GM12878 (cell line): ENCODE measurements at regions of chr10 and their contacts with region 1.

Region 1: GRCh38 chr10:72223743-72224101 is 7.6 kb upstream of the ASCC1 start:
- DNase-seq: no peak
- ATAC-seq: peak; percentile 71
- H3K4me3 ChIP-seq: no peak overlapping the region
- H3K27ac ChIP-seq: peak overlapping the region; percentile 47
- H3K4me1 ChIP-seq: peaks cover 29% of the 10 kb centered on the region
- H3K27me3 ChIP-seq: no peaks in the 10 kb centered on the region
- CTCF ChIP-seq: no peak
- EP300 ChIP-seq: no peak
- POLR2A ChIP-seq: no peak
- RAD21 ChIP-seq: no peak

Region 2: DNA sequence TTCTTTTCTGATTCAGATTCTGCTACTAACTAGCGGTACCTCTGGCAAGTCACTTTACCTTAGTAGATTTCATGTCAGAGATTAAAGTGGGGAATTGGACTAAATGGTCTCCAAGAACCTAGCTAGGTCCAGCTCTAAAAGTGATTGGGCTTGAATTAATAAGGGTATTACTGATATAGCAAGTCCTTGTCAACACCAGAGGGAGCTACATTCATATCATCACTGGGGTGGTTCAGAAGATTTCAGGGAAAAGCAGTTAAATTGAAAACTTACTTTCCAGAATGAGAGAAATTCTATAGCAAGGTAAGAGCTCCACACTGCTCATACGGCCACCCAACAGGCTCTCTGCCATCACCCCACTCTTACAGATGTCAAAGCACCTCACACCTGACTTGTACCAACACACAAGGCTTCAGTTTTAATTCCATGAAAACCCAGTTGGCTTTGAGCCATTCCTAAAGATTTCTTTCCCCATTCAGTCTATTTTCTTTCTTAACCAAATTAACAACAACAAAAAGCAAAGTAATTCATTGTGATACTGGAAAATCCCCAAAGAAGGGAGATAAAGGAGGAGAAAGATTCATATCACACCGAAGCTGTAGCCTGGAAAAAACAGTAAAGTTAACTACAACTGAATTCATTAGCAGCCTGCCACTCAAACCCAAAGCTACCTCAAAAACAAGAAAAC is 97.4 kb before region 1 on chr10:
- CTCF ChIA-PET with region 1: interaction called, 127 read pairs
- POLR2A ChIA-PET with region 1: interaction called, 18 read pairs
- RAD21 ChIA-PET with region 1: interaction called, 89 read pairs
- SMC1A ChIA-PET with region 1: interaction called, 122 read pairs
- in situ Hi-C with region 1: no loop called
- intact Hi-C with region 1: no loop called
- DNase-seq: no peak
- ATAC-seq: peak; percentile 42
- H3K4me3 ChIP-seq: no peak overlapping the region
- H3K27ac ChIP-seq: no peak overlapping the region
- H3K4me1 ChIP-seq: no peaks in the 10 kb centered on the region
- H3K27me3 ChIP-seq: no peaks in the 10 kb centered on the region
- CTCF ChIP-seq: peak; percentile 13 to 46 (median 28); a peak in 4 of 6 replicates
- EP300 ChIP-seq: no peak
- POLR2A ChIP-seq: no peak
- RAD21 ChIP-seq: peak; percentile 57

Region 3: DNA sequence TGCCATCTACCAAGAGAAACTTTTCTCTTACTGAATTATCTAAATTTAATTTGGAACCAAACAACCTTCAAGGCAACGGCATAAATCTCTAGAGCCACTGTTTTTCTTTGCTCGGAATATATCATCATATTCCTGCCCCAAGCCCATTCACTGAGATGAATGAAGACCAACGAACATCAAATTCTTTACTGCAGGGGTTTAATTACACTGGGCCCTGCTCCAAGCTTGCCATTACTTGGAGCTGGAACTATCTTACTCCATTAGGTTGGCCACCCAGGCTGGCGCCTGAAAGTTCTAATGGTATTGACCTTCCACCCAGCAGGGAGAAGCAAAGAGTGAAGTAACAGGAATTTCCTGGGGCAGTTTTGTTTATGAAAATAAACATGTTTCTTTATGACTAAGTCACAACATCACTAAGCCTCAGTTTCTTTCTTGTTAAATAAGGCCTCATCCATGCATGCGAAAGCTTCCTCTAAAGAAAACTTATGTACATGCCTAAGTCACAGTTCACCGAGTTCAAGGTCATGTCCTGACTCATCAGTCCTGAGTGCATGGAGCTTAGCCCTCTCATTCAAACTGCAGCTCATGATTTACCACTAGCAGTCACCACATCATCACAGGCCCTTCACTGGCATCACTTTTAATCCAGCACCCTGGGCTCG is 50.0 kb before region 1 on chr10:
- CTCF ChIA-PET with region 1: interaction called, 16 read pairs
- POLR2A ChIA-PET with region 1: no interaction called
- RAD21 ChIA-PET with region 1: interaction called, 13 read pairs
- SMC1A ChIA-PET with region 1: interaction called, 10 read pairs
- in situ Hi-C with region 1: no loop called
- intact Hi-C with region 1: loop called (anchors 5 kb)
- DNase-seq: peak; percentile 86
- ATAC-seq: peak; percentile 91
- H3K4me3 ChIP-seq: no peak overlapping the region; the same call in 1 of the 2 replicates
- H3K27ac ChIP-seq: peak overlapping the region; percentile 67
- H3K4me1 ChIP-seq: peaks cover 35% of the 10 kb centered on the region
- H3K27me3 ChIP-seq: no peaks in the 10 kb centered on the region
- CTCF ChIP-seq: no peak
- EP300 ChIP-seq: no peak
- POLR2A ChIP-seq: no peak
- RAD21 ChIP-seq: no peak

Region 4: GRCh38 chr10:72248468-72249151 is 24.9 kb after region 1 on chr10:
- CTCF ChIA-PET with region 1: interaction called, 18 read pairs
- POLR2A ChIA-PET with region 1: interaction called, 19 read pairs
- RAD21 ChIA-PET with region 1: interaction called, 129 read pairs
- SMC1A ChIA-PET with region 1: interaction called, 74 read pairs
- in situ Hi-C with region 1: no loop called
- intact Hi-C with region 1: loop called (anchors 2 kb)
- DNase-seq: peak; percentile 99
- ATAC-seq: peak; percentile 95
- H3K4me3 ChIP-seq: peak overlapping the region; percentile 55; the same call in 1 of the 2 replicates
- H3K27ac ChIP-seq: peak overlapping the region; percentile 97
- H3K4me1 ChIP-seq: peaks cover 72% of the 10 kb centered on the region
- H3K27me3 ChIP-seq: no peaks in the 10 kb centered on the region
- CTCF ChIP-seq: no peak
- EP300 ChIP-seq: peak; percentile 88 to 91
- POLR2A ChIP-seq: peak; percentile 89
- RAD21 ChIP-seq: no peak

Region 5: GRCh38 chr10:72297968-72298773 is 74.4 kb after region 1 on chr10:
- CTCF ChIA-PET with region 1: interaction called, 4 read pairs
- POLR2A ChIA-PET with region 1: interaction called, 3 read pairs
- RAD21 ChIA-PET with region 1: interaction called, 5 read pairs
- SMC1A ChIA-PET with region 1: interaction called, 5 read pairs
- in situ Hi-C with region 1: no loop called
- intact Hi-C with region 1: loop called (anchors 2 kb)
- DNase-seq: peak; percentile 91
- ATAC-seq: peak; percentile 84
- H3K4me3 ChIP-seq: peak overlapping the region; percentile 80
- H3K27ac ChIP-seq: peak overlapping the region; percentile 100
- H3K4me1 ChIP-seq: peaks cover 40% of the 10 kb centered on the region
- H3K27me3 ChIP-seq: no peaks in the 10 kb centered on the region
- CTCF ChIP-seq: no peak
- EP300 ChIP-seq: peak in 1 of 2 experiments; percentile 24; a peak in 1 of 4 replicates
- POLR2A ChIP-seq: peak; percentile 83
- RAD21 ChIP-seq: no peak

Region 6: DNA sequence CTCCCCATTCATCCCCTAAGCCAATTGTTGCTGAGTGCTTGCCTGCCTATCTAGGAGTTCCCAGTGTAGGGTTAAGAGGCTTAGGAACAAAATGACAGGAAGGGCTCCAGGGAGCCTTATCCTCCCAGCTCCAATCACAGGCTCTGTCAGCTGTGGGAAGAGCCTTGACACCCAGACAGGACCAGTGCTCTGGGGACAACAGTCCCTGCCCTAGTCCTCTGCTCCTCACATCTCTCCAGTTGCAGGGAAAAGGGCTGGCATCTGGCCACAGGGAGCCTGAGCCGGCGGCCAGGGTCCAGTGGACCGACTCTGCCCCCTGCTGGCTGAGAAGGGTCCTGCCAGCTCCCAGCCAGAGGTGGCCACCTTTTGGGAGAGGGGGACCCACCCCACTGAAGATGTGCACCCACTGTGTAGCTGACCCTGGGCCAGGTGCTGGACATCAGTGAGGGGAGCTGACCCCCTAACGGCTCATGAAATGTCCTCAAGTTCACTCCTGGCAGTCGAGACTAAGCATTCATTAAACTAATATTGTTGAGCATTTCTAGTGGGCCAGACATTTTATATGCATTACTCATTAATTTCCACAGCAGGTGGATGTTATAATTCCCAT is 113.4 kb after region 1 on chr10:
- CTCF ChIA-PET with region 1: interaction called, 32 read pairs
- POLR2A ChIA-PET with region 1: interaction called, 10 read pairs
- RAD21 ChIA-PET with region 1: interaction called, 19 read pairs
- SMC1A ChIA-PET with region 1: interaction called, 24 read pairs
- in situ Hi-C with region 1: loop called (anchors 5 kb)
- intact Hi-C with region 1: loop called (anchors 2 kb)
- DNase-seq: no peak
- ATAC-seq: peak; percentile 11; the same call in 1 of the 3 replicates
- H3K4me3 ChIP-seq: no peak overlapping the region
- H3K27ac ChIP-seq: peak overlapping the region; percentile 1; the same call in 1 of the 2 replicates
- H3K4me1 ChIP-seq: peaks cover 61% of the 10 kb centered on the region
- H3K27me3 ChIP-seq: no peaks in the 10 kb centered on the region
- CTCF ChIP-seq: peak; percentile 95 to 98 (median 96)
- EP300 ChIP-seq: no peak
- POLR2A ChIP-seq: peak; percentile 18; the same call in 1 of the 2 replicates
- RAD21 ChIP-seq: peak; percentile 91

Region 7: GRCh38 chr10:72435570-72435969 is 211.8 kb after region 1 on chr10:
- CTCF ChIA-PET with region 1: no interaction called
- POLR2A ChIA-PET with region 1: no interaction called
- RAD21 ChIA-PET with region 1: no interaction called
- SMC1A ChIA-PET with region 1: no interaction called
- in situ Hi-C with region 1: no loop called
- intact Hi-C with region 1: no loop called
- DNase-seq: no peak
- ATAC-seq: no peak
- H3K4me3 ChIP-seq: no peak overlapping the region
- H3K27ac ChIP-seq: no peak overlapping the region
- H3K4me1 ChIP-seq: no peaks in the 10 kb centered on the region
- H3K27me3 ChIP-seq: no peaks in the 10 kb centered on the region
- CTCF ChIP-seq: no peak
- EP300 ChIP-seq: no peak
- POLR2A ChIP-seq: no peak
- RAD21 ChIP-seq: no peak